Posterior vena cava (tissue), 2 donors: ENCODE measurements at regions of chr16 and their contacts with region 1.

Region 1: DNA sequence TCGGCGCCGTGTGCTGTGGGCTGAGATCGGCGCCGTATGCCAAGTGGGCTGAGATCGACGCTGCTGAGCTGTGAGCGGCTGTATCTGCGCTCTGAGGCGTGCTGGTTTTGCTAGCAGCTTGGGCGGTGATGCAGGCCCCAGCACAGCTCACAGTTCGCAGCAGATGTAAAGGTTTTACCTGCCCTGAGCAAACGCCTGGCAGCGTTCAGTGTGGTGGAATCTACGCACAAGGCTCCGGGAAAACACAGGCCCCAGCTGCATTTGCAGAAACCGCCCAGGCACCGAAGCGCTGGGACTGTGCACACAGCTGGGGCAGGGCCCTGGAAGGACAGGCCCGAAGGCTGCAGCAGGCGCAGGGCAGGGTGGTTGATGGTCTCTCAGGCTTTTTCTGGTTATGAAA is 8.0 kb upstream of the ZNF469 start:
- DNase-seq: peak; percentile 49

Region 2: GRCh38 chr16:88343271-88343791 is 31.4 kb before region 1 on chr16:
- intact Hi-C with region 1: loop called in 1 of 2 experiments (anchors 1 kb)
- DNase-seq: no peak